ENCODE measurements at regions of chr4 and their contacts with region 1.

Region 1: GRCh38 chr4:83639849-83640493 is 104.1 kb downstream of the GPAT3 start:
- DNase-seq: no peak

Region 2: DNA sequence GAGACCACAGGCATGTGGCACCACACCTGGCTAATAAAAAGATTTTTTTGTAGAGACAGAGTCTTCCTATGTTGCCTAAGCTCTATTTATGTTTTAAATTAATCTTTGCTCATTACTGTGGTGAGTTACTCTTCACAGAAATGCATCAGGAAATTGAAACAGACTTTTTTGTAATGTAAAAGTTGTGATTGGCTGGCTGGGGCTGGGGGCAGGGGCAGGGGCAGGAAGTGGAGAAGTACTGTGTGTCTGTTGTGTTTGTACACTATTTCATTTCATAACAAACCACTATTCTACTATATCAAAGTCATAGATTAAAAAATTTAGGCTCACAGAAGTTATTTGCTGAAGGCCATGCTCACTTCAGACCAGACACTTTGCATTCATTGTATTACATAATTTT is 136.0 kb before region 1 on chr4:
- intact Hi-C with region 1: loop called (anchors 1 kb)
- DNase-seq: no peak

Region 3: GRCh38 chr4:83961575-83961974 is 321.6 kb after region 1 on chr4:
- intact Hi-C with region 1: loop called (anchors 10 kb)
- DNase-seq: no peak

Region 4: GRCh38 chr4:84503495-84504437 is 863.8 kb after region 1 on chr4:
- intact Hi-C with region 1: loop called (anchors 5 kb)
- DNase-seq: no peak